A549 (cell line): ENCODE measurements at regions of chr2 and their contacts with region 1.

Region 1: DNA sequence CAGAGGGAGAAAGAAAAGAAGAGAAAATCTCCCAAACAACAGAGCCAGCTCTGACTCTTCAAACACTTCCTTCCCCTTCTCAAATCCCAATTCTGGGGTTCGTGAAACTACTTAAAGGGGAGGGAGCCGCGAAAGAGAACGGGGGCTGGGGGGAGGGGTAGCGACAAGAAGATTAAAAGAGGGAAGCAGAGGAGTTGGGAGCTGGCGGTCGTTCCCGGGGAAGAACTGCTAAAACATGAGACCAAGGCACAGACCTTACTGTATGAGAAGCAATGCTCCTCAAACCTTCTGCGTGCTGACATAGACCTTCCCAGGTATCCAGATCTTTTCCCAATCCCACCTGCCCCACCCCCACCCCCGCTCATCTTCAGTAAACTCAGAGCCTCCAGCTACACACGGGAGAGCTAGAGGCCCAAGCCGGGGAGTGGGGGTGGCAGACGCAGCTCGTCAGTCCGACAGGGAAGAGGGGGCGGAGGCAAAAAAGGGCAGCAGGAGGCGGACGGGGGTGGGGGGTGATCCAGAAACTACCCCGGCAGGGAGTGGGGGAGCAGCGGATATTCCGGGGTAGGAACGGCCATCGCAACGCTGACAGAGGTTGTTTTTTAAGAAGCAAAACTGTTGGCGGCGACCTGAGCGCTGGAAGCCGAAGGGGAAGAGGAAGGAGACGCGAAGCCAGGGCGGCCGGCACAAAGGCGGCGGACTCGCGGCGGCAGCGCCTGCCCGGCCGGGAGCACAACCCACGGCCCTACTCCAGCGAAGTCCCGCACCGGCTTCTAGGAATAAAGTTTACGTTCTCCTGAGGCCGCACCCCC is 1.0 kb downstream of the BAZ2B start:
- DNase-seq: peak; percentile 70 to 96
- ATAC-seq: peak; percentile 96 to 97
- H3K4me3 ChIP-seq: peak overlapping the region; percentile 67
- H3K27ac ChIP-seq: peak overlapping the region; percentile 96 to 98
- H3K4me1 ChIP-seq: peaks cover 57% of the 10 kb centered on the region
- CTCF ChIP-seq: no peak
- EP300 ChIP-seq: 0 out of 5 replicates have a peak, but pooled peaks of 1 of the 2 experiments have one; percentile 13
- POLR2A ChIP-seq: peak; percentile 59
- RAD21 ChIP-seq: peak; percentile 2 to 25; a peak in 1 of 5 replicates

Region 2: DNA sequence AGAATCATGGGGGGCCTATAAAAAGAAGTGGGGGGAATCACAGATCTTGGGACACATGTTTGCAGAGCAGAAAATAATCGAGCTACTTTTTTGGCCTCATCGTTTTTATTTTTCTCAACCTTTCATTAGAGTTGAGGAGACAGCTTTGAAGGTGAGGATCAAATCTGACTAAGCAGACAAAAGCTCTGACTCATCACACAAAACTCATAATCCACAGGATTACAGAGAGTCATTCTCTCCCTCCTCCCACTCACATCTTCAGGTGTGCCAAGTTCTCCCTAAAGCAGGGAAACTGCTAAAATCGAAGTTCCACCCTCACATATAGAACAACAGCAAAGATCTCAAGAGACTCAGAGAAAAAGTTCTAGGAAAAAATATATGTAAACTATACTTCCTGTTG is 14.6 kb before region 1 on chr2:
- CTCF ChIA-PET with region 1: interaction called, 3 read pairs
- POLR2A ChIA-PET with region 1: interaction called, 21 read pairs
- DNase-seq: peak; percentile 33 to 52
- ATAC-seq: peak; percentile 82 to 87; a peak in 5 of 6 replicates
- H3K4me3 ChIP-seq: no peak overlapping the region
- H3K27ac ChIP-seq: peak overlapping the region; percentile 51 to 80
- H3K4me1 ChIP-seq: peaks cover 34% of the 10 kb centered on the region
- CTCF ChIP-seq: no peak
- EP300 ChIP-seq: no peak
- POLR2A ChIP-seq: no peak
- RAD21 ChIP-seq: no peak

Region 3: DNA sequence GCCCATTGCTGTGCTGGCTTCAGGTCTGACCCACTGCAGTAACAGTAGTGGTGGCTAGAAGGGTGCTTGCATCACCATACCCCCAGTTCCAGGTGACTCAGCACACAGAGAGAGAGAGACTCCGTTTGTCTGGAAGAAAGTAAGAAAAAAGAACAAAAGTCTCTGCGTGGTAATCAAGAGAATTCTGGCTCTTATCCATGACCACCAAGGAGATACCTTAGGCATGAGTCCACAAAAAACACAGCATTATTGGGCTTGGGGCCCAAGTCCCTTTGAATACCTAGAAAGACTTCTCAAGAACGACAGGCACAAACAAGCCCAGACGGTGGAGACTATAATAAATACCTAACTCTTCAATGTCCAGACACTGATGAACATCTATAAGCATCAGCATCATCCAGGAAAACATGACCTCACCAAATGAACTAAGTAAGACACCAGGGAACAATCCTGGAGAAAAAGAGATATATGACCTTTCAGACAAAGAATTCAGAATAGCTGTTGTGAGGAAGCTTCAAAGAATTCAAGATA is 22.7 kb after region 1 on chr2:
- CTCF ChIA-PET with region 1: interaction called, 3 read pairs
- POLR2A ChIA-PET with region 1: interaction called, 20 read pairs
- DNase-seq: peak in 1 of 2 experiments; percentile 87
- ATAC-seq: peak; percentile 90 to 97
- H3K4me3 ChIP-seq: no peak overlapping the region
- H3K27ac ChIP-seq: peak overlapping the region; percentile 82 to 85
- H3K4me1 ChIP-seq: peaks cover 24% of the 10 kb centered on the region
- CTCF ChIP-seq: no peak
- EP300 ChIP-seq: peak; percentile 58 to 63; a peak in 3 of 5 replicates
- POLR2A ChIP-seq: no peak
- RAD21 ChIP-seq: 0 out of 5 replicates have a peak, but pooled peaks of 1 of the 2 experiments have one; percentile 28